ENCODE measurements at regions of chr10 and their contacts with region 1.

Region 1: DNA sequence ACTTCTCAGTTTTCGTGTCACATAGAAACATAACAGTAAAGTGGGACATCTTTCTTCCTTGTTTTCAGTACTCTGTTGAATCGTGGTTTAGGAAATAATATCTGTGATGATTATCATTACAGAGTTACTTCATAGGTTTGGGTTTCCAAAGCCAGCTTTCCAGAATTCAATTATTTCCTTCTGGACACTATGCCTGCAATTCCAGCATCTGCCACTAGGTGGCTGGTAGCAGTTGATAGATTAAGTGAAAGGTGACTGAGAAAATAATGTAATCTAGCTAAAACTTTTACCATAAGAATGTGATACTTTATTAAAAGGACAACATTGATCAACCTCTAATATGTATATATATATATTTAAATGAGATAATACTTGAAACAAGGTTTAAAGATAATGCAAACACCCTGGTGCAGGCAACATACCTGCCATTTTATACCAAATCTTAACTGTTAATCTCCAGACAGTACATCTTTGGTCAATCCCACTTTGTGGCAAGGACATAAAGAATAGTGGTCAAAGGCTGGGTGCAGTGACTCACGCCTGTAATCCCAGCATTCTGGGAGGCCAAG is 102.6 kb downstream of the SH3PXD2A start:
- DNase-seq: peak; percentile 62
- ATAC-seq: no peak
- H3K4me3 Mint-ChIP-seq: no peak overlapping the region
- H3K27ac Mint-ChIP-seq: no peak overlapping the region
- H3K4me1 Mint-ChIP-seq: peaks cover 9% of the 10 kb centered on the region
- H3K27me3 Mint-ChIP-seq: no peaks in the 10 kb centered on the region
- CTCF ChIP-seq: peak; percentile 99

Region 2: GRCh38 chr10:103668351-103669242 is 84.2 kb before region 1 on chr10:
- CTCF ChIA-PET with region 1: no interaction called
- POLR2A ChIA-PET with region 1: no interaction called
- intact Hi-C with region 1: no loop called
- DNase-seq: peak; percentile 8
- ATAC-seq: peak; percentile 55
- H3K4me3 Mint-ChIP-seq: peak overlapping the region; percentile 34
- H3K27ac Mint-ChIP-seq: no peak overlapping the region
- H3K4me1 Mint-ChIP-seq: peaks cover 9% of the 10 kb centered on the region
- H3K27me3 Mint-ChIP-seq: no peaks in the 10 kb centered on the region
- CTCF ChIP-seq: no peak

Region 3: GRCh38 chr10:103765981-103766380 is 13.2 kb after region 1 on chr10:
- CTCF ChIA-PET with region 1: interaction called, 23 read pairs
- POLR2A ChIA-PET with region 1: interaction called, 5 read pairs
- intact Hi-C with region 1: no loop called
- DNase-seq: peak; percentile 84
- ATAC-seq: peak; percentile 62
- H3K4me3 Mint-ChIP-seq: no peak overlapping the region
- H3K27ac Mint-ChIP-seq: no peak overlapping the region
- H3K4me1 Mint-ChIP-seq: peaks cover 43% of the 10 kb centered on the region
- H3K27me3 Mint-ChIP-seq: no peaks in the 10 kb centered on the region
- CTCF ChIP-seq: no peak

Region 4: GRCh38 chr10:103772096-103772845 is 19.5 kb after region 1 on chr10:
- CTCF ChIA-PET with region 1: interaction called, 23 read pairs
- POLR2A ChIA-PET with region 1: interaction called, 3 read pairs
- intact Hi-C with region 1: no loop called
- DNase-seq: peak; percentile 72
- ATAC-seq: peak; percentile 78
- H3K4me3 Mint-ChIP-seq: peak overlapping the region; percentile 77
- H3K27ac Mint-ChIP-seq: peak overlapping the region; percentile 90
- H3K4me1 Mint-ChIP-seq: peaks cover 17% of the 10 kb centered on the region
- H3K27me3 Mint-ChIP-seq: no peaks in the 10 kb centered on the region
- CTCF ChIP-seq: no peak